Activated B cell treated with CpG ODN at 0.5 μM for 24 hours (primary cell): ENCODE measurements at regions of chr19 and their contacts with region 1.

Region 1: DNA sequence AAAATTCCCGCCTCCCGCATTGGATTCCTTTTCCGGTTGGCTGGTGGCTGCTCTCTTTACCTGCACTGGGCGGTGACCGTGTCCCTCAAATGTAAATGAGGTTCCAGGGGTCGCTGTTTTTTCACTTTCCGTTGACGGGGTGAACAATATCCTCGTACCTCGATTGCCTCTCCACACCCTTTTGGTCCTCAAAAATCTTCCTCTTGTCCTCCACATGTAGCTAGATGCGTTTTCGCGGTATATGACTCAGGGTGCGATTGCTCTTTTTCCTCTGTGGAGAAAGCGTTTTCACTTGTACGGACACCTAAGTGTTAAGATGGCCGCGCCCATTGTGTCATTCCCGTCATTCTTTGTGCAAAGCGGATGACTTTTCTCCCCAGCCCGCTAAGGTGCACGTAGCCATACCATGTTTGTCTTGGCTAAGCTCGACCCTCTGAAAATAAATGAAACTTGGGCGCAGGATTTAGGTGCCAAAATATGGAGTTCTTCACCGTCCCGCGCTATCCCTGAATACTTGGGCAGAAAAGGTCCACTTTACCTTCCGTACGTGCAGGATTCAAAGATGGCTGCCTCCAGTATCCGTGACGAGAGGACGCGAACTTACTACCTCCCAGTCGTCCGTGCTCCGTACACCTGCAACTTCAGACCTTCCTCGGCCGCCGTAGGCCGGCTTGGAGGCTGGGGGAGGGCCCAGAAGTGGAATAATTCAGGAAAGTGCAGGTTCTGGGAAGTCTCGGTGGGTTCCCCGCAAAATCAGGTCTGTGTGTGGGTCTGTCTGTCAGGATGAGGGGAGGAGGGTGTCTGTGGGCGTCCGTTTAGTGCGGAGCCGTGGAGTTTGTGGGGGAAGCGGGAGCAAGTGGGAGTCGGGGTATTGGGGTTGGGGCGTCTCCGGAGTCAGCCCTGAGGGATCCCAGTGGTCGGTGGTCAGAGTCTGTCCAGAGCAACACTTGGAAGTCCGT is at the start of gene ZNF613:
- DNase-seq: peak; percentile 71
- ATAC-seq: peak; percentile 94
- H3K4me3 Mint-ChIP-seq: peak within 1 kb of the TSS; percentile 100
- H3K27ac Mint-ChIP-seq: peak within 1 kb of the TSS; percentile 93
- H3K4me1 Mint-ChIP-seq: peaks cover 24% of the 10 kb centered on the region
- H3K27me3 Mint-ChIP-seq: no peaks in the 10 kb centered on the region
- CTCF ChIP-seq: no peak
- total RNA-seq, gene ZNF613: 7.7 and 7.8 TPM in 2 replicates

Region 2: DNA sequence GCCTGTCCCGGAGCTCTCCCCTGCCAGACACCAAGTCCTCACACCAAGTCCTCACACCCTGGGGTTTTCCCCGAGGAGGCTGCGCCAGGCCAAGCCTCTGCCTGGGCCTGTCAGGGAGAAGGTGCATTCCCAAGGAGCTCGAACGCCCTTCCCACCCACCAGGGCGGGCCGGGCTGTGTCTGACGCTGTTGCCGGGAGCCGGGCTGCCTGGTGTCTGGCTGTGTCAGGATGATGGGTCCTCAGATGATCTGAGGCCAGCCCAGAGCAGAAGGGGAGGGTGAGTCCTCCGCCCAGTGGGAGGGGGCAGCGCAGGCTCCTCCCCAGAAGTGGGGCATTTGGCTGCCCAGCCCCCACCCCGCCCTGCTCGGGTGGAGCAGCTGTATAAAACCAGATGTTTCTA is 201.0 kb before region 1 on chr19:
- CTCF ChIA-PET with region 1: no interaction called
- POLR2A ChIA-PET with region 1: no interaction called
- intact Hi-C with region 1: no loop called
- DNase-seq: no peak
- ATAC-seq: no peak
- H3K4me3 Mint-ChIP-seq: no peak overlapping the region
- H3K27ac Mint-ChIP-seq: no peak overlapping the region
- H3K4me1 Mint-ChIP-seq: peaks cover 5% of the 10 kb centered on the region
- H3K27me3 Mint-ChIP-seq: peaks cover 36% of the 10 kb centered on the region
- CTCF ChIP-seq: no peak

Region 3: GRCh38 chr19:51887522-51888498 is 39.3 kb before region 1 on chr19 and contains the start of gene ZNF577:
- CTCF ChIA-PET with region 1: interaction called, 4 read pairs
- POLR2A ChIA-PET with region 1: no interaction called
- intact Hi-C with region 1: loop called (anchors 1 kb)
- DNase-seq: peak; percentile 44
- ATAC-seq: peak; percentile 93
- H3K4me3 Mint-ChIP-seq: peak within 1 kb of the TSS; percentile 94
- H3K27ac Mint-ChIP-seq: peak within 1 kb of the TSS; percentile 89
- H3K4me1 Mint-ChIP-seq: peaks cover 5% of the 10 kb centered on the region
- H3K27me3 Mint-ChIP-seq: no peaks in the 10 kb centered on the region
- CTCF ChIP-seq: no peak
- total RNA-seq, gene ZNF577: 13.2 and 13.9 TPM in 2 replicates

Region 4: GRCh38 chr19:51986309-51987291 is 59.5 kb after region 1 on chr19 and contains the start of gene ZNF350:
- CTCF ChIA-PET with region 1: no interaction called
- POLR2A ChIA-PET with region 1: no interaction called
- intact Hi-C with region 1: loop called (anchors 1 kb)
- DNase-seq: peak; percentile 72
- ATAC-seq: peak; percentile 98
- H3K4me3 Mint-ChIP-seq: peak within 1 kb of the TSS; percentile 97
- H3K27ac Mint-ChIP-seq: peak within 1 kb of the TSS; percentile 93
- H3K4me1 Mint-ChIP-seq: peaks cover 20% of the 10 kb centered on the region
- H3K27me3 Mint-ChIP-seq: no peaks in the 10 kb centered on the region
- CTCF ChIP-seq: no peak
- total RNA-seq, gene ZNF350: 32.2 and 35.2 TPM in 2 replicates

Region 5: GRCh38 chr19:52028027-52028779 is 101.1 kb after region 1 on chr19 and contains the start of gene ZNF614:
- CTCF ChIA-PET with region 1: no interaction called
- POLR2A ChIA-PET with region 1: interaction called, 3 read pairs
- intact Hi-C with region 1: loop called (anchors 1 kb)
- DNase-seq: peak; percentile 86
- ATAC-seq: peak; percentile 89
- H3K4me3 Mint-ChIP-seq: peak within 1 kb of the TSS; percentile 98
- H3K27ac Mint-ChIP-seq: peak within 1 kb of the TSS; percentile 93
- H3K4me1 Mint-ChIP-seq: peaks cover 29% of the 10 kb centered on the region
- H3K27me3 Mint-ChIP-seq: no peaks in the 10 kb centered on the region
- CTCF ChIP-seq: no peak
- total RNA-seq, gene ZNF614: 14.0 and 14.3 TPM in 2 replicates

Region 6: GRCh38 chr19:52095172-52096014 is 168.3 kb after region 1 on chr19 and contains the start of gene ZNF841:
- CTCF ChIA-PET with region 1: no interaction called
- POLR2A ChIA-PET with region 1: no interaction called
- intact Hi-C with region 1: loop called (anchors 10 kb)
- DNase-seq: peak; percentile 86
- ATAC-seq: peak; percentile 98
- H3K4me3 Mint-ChIP-seq: peak within 1 kb of the TSS; percentile 98
- H3K27ac Mint-ChIP-seq: peak within 1 kb of the TSS; percentile 94
- H3K4me1 Mint-ChIP-seq: peaks cover 30% of the 10 kb centered on the region
- H3K27me3 Mint-ChIP-seq: no peaks in the 10 kb centered on the region
- CTCF ChIP-seq: no peak
- total RNA-seq, gene ZNF841: 34.7 and 42.7 TPM in 2 replicates

Region 7: DNA sequence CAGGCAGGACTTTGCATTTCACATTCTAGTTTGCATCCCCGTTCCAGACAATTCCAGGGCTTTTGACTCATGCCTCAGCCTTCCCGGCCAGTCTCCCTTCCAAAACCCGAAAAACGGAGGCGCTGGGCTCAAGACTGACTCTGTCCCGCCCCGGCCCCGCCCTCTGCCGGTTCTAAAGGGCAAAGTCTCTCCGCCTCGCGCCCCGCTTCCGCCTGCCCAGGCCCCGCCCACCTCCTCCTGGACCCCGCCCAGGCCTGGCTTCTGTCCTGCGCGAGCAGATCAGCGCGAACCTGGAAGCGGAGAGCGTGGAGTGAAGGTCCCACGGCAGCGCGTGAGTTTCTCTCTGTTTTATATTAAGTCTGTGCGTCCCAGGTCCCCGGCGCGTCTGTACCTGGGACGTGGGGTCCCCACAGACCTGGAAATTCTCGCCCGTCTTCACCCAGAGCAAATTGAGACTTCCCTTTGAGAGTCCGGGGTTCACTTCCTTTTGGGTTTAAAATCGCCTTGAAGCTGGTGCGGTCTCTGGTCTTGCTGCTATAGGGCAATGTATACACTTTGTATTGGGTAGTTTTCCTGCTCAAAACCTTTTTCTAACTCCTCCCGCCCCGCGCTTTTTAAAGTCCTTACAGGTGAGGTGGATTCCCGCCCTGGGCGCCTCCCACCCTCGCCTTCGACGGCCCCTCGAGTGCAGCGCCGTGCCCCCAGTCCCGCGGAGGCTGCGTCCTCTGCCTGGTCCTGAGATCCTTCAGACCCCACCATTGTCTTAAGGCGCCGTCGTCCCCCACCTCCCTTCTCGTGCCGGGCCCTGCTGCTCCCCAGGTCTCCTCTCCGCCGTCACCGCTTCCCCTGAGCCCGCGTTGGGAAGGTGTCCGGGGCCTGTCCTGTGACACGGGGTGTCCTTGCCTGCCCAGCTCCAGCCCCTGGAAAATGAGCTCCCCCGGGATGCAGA is 674.2 kb after region 1 on chr19:
- CTCF ChIA-PET with region 1: no interaction called
- POLR2A ChIA-PET with region 1: interaction called, 10 read pairs
- intact Hi-C with region 1: no loop called
- DNase-seq: peak; percentile 95
- ATAC-seq: peak; percentile 99
- H3K4me3 Mint-ChIP-seq: peak overlapping the region; percentile 93
- H3K27ac Mint-ChIP-seq: peak overlapping the region; percentile 86
- H3K4me1 Mint-ChIP-seq: peaks cover 26% of the 10 kb centered on the region
- H3K27me3 Mint-ChIP-seq: no peaks in the 10 kb centered on the region
- CTCF ChIP-seq: no peak